ENCODE measurements at regions of chr17 and their contacts with region 1.

Region 1: DNA sequence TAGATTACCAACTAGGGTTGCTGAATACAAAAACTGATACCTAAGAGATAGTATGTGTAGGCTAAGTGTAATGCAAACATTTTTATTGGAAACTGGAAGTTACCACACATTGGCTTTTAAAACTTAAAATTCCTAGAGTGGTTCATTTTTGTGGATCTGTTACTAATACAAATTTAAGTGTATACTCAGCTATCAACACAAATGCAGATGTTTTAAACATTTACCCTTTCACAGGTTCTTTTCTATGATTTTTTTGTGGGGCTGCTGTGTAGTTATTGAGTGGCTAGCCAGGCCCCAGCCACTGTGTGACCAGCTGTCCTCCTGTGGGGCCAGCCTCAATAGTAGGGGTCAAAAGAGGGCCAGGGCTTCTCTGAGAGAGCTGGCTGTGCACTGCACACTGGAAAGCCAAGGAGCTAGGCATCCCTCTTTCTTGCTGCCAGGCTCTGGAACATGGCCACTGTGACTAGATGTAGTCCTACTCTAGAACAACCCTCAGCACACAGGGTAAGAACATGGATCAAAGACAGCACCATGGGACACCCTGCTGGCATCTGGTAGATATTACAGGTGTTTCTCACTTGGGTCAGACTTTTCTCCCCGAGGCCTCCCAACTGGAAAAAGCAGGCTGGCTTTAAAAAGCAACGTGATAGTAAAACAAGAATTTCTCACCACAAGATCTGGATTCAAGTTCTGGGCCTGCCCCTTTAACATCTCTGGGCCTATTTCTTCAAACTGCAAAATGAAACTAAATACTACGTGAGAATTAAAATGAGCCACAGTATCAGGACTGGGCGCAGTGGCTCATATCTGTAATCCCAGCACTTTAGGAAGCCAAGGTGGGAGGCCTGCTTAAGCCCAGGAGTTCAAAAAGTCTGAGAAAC is 7.3 kb upstream of the VEZF1 start:
- DNase-seq: no peak
- H3K4me3 ChIP-seq: no peak overlapping the region
- CTCF ChIP-seq: peak; percentile 70

Region 2: GRCh38 chr17:57833179-57833939 is 162.0 kb before region 1 on chr17:
- CTCF ChIA-PET with region 1: interaction called, 39 read pairs
- POLR2A ChIA-PET with region 1: no interaction called
- DNase-seq: no peak
- H3K4me3 ChIP-seq: peak overlapping the region; percentile 58
- CTCF ChIP-seq: peak; percentile 78

Region 3: DNA sequence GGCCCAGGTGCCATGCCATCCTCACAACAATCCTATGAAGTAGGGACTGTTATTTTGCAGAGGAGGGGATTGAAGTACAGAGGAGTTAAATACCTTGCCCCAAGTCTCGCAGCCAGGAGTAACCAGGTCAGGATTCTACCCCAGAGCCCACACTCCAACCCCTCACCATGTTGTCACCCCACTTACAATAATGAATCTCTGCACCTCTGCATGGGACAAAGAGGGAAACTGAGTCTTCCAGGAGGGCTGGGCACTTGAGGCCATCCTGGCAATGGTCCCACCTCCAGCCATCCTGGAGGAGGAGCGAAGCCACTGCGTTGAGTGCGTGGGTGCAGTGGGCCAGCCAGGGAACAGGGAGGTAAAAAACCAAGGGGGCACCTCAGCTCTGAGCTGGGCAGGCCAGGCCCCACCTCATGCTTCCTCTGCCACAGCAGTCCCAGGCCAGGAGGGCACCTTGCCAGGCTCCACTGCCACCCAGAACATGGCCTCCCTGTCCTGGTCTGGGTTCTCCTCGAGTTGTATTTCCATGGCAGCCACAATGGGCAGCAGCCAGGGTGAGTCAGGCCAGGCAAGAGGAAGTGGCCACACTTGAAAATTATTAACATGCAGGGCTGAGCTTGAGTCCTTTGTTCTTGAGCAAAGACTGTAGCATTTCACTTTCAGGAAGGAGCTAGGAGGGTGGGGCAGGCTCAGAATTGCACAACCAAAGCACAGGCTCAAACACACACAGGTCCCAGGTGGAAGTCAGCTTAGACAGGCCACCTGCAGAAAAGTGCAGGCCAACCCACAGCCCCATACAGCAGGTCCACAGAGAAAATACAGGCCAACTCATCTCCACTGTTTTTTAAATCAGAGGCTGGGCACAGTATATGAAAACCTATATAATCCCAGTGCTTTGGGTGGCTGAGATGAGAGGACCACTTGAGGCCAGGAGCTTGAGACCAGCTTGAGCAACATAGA is 92.2 kb before region 1 on chr17:
- CTCF ChIA-PET with region 1: interaction called, 18 read pairs
- POLR2A ChIA-PET with region 1: no interaction called
- DNase-seq: no peak
- H3K4me3 ChIP-seq: no peak overlapping the region
- CTCF ChIP-seq: no peak

Region 4: GRCh38 chr17:57946798-57947358 is 48.4 kb before region 1 on chr17:
- CTCF ChIA-PET with region 1: interaction called, 17 read pairs
- POLR2A ChIA-PET with region 1: interaction called, 3 read pairs
- DNase-seq: no peak
- H3K4me3 ChIP-seq: peak overlapping the region; percentile 51
- CTCF ChIP-seq: no peak

Region 5: GRCh38 chr17:57955183-57955931 is 40.0 kb before region 1 on chr17 and contains the start of gene CUEDC1:
- CTCF ChIA-PET with region 1: interaction called, 17 read pairs
- POLR2A ChIA-PET with region 1: no interaction called
- DNase-seq: no peak
- H3K4me3 ChIP-seq: peak within 1 kb of the TSS; percentile 70
- CTCF ChIP-seq: peak; percentile 68

Region 6: GRCh38 chr17:58088624-58089023 is 93.3 kb after region 1 on chr17:
- CTCF ChIA-PET with region 1: interaction called, 12 read pairs
- POLR2A ChIA-PET with region 1: no interaction called
- DNase-seq: no peak
- H3K4me3 ChIP-seq: no peak overlapping the region
- CTCF ChIP-seq: no peak

Region 7: GRCh38 chr17:58112970-58113631 is 117.8 kb after region 1 on chr17:
- CTCF ChIA-PET with region 1: interaction called, 84 read pairs
- POLR2A ChIA-PET with region 1: no interaction called
- DNase-seq: no peak
- H3K4me3 ChIP-seq: no peak overlapping the region
- CTCF ChIP-seq: peak; percentile 89